Activated naive CD4-positive, alpha-beta T cell treated with anti-CD3 and anti-CD28 coated beads, Interleukin-2, amount 10 ng/mL, durations not matched to agents 7 days and 5 days (primary cell): ENCODE measurements at regions of chr15 and their contacts with region 1.

Region 1: GRCh38 chr15:41774062-41774881 is at the start of gene MAPKBP1:
- DNase-seq: peak; percentile 99
- H3K4me3 Mint-ChIP-seq: peak within 1 kb of the TSS; percentile 95
- H3K27ac Mint-ChIP-seq: peak within 1 kb of the TSS; percentile 97
- H3K4me1 Mint-ChIP-seq: peaks cover 61% of the 10 kb centered on the region
- H3K27me3 Mint-ChIP-seq: no peaks in the 10 kb centered on the region

Region 2: DNA sequence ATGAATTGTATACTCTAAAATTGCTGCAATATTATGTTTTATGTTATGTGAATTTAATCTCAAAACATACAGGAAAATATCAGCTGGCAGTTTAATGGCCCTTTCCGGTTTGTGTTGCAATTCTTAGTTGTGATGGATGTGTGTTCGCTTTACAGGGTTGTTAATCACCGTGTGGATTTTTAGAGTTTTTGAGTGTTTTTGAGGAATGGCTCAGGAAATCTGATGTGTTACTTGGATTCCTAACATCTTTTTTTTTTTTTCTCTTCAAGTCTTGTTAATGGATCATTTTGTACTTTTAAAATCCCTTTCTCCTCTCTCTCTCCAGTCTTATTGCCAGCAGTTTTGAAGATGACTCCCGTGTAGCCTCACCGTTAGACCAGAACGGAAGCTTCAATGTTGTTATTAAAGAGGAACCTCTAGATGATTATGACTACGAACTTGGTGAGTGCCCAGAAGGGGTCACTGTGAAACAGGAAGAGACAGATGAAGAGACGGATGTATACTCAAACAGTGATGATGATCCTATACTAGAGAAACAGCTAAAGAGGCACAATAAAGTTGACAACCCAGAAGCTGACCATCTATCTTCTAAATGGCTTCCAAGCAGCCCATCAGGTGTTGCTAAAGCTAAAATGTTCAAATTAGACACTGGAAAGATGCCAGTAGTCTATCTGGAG is 78.4 kb before region 1 on chr15:
- CTCF ChIA-PET with region 1: interaction called, 17 read pairs
- DNase-seq: peak; percentile 70
- H3K4me3 Mint-ChIP-seq: no peak overlapping the region
- H3K27ac Mint-ChIP-seq: peak overlapping the region; percentile 68
- H3K4me1 Mint-ChIP-seq: peaks cover 28% of the 10 kb centered on the region
- H3K27me3 Mint-ChIP-seq: no peaks in the 10 kb centered on the region

Region 3: GRCh38 chr15:41795996-41796856 is 22.0 kb after region 1 on chr15:
- CTCF ChIA-PET with region 1: interaction called, 15 read pairs
- DNase-seq: no peak
- H3K4me3 Mint-ChIP-seq: no peak overlapping the region
- H3K27ac Mint-ChIP-seq: peak overlapping the region; percentile 75
- H3K4me1 Mint-ChIP-seq: peaks cover 40% of the 10 kb centered on the region
- H3K27me3 Mint-ChIP-seq: no peaks in the 10 kb centered on the region

Region 4: DNA sequence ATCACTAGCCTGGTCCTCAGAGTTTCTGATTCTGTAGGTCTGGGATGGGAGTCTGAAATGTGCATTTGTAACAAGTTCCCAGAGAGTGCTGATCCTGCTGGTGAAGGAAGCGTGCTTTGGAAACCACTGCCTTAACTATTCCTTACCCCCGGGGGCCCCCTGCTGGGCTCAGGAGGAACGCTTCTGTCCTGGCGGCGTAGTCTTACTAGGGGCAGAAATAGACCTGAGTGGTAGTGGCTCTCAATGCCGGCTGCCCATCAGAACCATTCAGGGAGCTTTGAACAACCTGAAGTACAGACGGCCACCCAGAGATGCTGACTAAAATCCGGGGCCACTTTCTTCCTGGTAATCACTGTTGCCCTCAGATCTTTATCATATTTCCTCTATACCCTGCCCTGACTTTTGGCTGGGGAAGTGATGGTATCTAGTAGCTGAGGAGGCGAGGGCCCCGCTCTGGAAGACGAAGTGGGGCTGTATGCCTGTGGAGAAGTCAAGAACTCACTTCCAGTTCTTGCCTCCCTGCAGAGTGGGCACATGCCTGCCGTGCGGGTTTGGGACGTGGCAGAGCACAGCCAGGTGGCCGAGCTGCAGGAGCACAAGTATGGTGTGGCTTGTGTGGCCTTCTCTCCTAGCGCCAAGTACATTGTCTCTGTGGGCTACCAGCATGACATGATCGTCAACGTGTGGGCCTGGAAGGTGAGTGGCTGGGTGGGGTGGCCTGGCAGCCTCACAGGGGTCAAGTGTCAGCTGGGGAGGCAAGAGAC is 37.3 kb after region 1 on chr15:
- CTCF ChIA-PET with region 1: interaction called, 253 read pairs
- DNase-seq: peak; percentile 83
- H3K4me3 Mint-ChIP-seq: no peak overlapping the region
- H3K27ac Mint-ChIP-seq: peak overlapping the region; percentile 62
- H3K4me1 Mint-ChIP-seq: peaks cover 29% of the 10 kb centered on the region
- H3K27me3 Mint-ChIP-seq: no peaks in the 10 kb centered on the region

Region 5: DNA sequence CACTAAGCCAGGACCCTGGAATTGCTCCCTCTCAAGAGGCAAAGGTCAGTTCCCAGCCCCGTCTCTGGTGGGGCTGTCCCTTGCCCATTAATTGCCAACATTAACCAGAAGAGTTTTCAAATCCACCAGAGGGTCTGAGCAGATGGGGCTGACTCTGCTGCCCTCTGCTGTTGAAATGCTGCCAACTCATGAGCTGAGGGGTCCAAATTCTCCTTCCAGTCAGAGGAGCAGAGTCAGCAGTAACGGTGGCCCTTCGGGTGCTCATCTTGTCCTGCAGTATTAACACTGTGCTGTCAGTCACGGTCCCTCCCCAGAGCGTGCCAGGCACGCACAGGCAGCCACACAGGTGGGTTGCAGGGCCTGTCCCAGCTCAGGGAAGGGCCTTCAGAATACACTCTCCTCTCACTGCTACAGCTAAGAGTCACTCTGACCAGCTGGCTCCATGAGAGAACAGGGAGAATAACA is 130.3 kb after region 1 on chr15:
- CTCF ChIA-PET with region 1: interaction called, 102 read pairs
- DNase-seq: peak; percentile 80
- H3K4me3 Mint-ChIP-seq: no peak overlapping the region
- H3K27ac Mint-ChIP-seq: peak overlapping the region; percentile 42
- H3K4me1 Mint-ChIP-seq: peaks cover 17% of the 10 kb centered on the region
- H3K27me3 Mint-ChIP-seq: no peaks in the 10 kb centered on the region

Region 6: GRCh38 chr15:41928637-41929620 is 154.7 kb after region 1 on chr15:
- CTCF ChIA-PET with region 1: no interaction called
- DNase-seq: no peak
- H3K4me3 Mint-ChIP-seq: no peak overlapping the region
- H3K27ac Mint-ChIP-seq: no peak overlapping the region
- H3K4me1 Mint-ChIP-seq: peaks cover 58% of the 10 kb centered on the region
- H3K27me3 Mint-ChIP-seq: no peaks in the 10 kb centered on the region